A673 (cell line): ENCODE measurements at regions of chr3 and their contacts with region 1.

Region 1: DNA sequence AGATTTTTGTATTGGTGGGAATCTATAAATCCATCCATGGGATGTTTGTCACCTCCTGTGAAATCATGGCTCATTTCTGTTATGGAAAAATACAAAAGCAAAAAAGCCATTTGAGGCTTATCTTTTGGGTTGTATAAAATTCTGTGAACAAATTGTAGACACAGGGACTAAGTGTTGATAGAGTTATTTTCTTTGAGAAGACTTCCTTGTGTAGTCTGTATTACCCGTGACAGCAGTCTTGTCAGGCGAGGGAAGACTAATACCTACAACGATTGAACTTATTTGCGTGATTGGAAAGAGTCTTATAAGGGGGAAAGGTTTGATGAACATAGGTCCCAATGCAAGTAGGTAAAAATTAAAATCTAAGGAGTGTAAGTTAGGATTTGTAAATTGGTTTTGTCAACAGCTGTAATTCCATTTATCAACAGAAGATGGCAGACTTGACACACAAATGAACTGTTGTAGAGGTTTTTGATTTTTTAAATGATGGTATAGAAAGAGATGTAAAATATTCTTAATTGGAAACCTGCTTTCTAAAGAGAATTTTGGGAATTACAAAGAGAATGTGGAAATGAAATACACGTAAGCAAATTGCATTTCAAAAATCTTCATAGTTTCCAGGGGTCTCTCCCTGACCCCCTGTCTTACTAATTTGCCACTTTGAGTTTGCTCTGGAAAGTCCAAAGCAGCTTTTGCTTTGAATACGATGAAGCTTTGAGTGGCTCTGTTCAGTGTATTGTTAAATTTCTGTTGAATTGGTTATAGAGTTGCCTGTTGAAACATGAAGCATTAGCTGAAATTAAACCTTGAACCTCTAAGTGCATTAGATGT is 33.2 kb downstream of the SLC25A26 start:
- DNase-seq: peak; percentile 27
- H3K4me3 ChIP-seq: no peak overlapping the region
- H3K27ac ChIP-seq: no peak overlapping the region
- H3K4me1 ChIP-seq: no peaks in the 10 kb centered on the region
- H3K27me3 ChIP-seq: no peaks in the 10 kb centered on the region
- CTCF ChIP-seq: peak; percentile 62

Region 2: DNA sequence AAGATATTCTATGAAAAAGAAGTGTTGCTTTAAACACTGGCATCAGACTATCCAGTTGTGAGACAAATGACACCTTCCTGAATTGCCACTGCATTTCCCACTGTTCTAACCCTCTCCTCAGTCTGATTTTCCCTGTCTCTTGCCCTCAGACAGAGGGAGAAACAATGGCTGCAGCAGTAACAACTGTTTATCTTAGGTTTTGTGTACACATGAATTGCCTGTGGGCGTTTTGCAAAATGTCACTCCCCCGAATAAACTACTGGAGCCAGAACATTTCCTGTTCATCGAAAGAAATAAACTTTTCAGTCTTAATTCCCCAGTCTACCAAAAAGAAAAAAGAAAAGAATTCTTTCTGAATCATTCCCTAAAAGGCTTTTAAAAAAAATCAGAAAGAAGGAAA is 370.4 kb before region 1 on chr3:
- CTCF ChIA-PET with region 1: no interaction called
- POLR2A ChIA-PET with region 1: no interaction called
- intact Hi-C with region 1: no loop called
- DNase-seq: no peak
- H3K4me3 ChIP-seq: no peak overlapping the region
- H3K27ac ChIP-seq: peak overlapping the region; percentile 57
- H3K4me1 ChIP-seq: peaks cover 7% of the 10 kb centered on the region
- H3K27me3 ChIP-seq: no peaks in the 10 kb centered on the region
- CTCF ChIP-seq: no peak

Region 3: DNA sequence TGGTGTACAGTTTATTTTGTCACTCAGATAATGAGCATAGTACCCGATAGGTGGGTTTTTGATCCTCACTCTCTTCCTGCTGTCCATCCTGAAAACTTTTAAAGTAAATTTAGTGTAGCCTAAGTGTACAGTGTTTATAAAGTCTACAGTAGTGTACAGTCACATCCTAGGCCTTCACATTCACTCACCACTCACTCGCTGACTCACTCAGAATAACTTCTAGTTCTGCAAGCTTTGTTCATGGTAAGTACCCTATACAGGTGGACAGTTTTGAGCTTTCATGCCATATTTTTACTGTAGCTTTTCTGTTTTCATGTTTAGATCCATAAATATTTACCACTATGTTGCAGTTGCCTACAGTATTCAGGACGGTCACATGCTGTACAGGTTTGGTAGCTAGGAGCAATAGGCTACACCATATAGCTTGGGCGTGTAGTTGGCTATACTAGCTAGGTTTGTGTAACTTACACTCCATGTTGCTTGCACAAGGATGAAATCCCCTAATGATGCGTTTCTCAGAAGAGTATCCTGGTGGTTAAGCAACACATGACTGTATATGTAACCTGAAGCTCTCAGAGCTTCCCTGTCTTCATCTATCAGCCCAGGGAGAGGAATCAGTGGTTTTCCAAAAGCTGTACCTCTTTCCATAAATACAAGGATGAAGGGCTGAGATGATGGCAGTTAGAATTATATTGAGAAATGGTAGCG is 120.8 kb before region 1 on chr3:
- CTCF ChIA-PET with region 1: no interaction called
- POLR2A ChIA-PET with region 1: no interaction called
- intact Hi-C with region 1: no loop called
- DNase-seq: no peak
- H3K4me3 ChIP-seq: no peak overlapping the region
- H3K27ac ChIP-seq: no peak overlapping the region
- H3K4me1 ChIP-seq: no peaks in the 10 kb centered on the region
- H3K27me3 ChIP-seq: no peaks in the 10 kb centered on the region
- CTCF ChIP-seq: no peak

Region 4: DNA sequence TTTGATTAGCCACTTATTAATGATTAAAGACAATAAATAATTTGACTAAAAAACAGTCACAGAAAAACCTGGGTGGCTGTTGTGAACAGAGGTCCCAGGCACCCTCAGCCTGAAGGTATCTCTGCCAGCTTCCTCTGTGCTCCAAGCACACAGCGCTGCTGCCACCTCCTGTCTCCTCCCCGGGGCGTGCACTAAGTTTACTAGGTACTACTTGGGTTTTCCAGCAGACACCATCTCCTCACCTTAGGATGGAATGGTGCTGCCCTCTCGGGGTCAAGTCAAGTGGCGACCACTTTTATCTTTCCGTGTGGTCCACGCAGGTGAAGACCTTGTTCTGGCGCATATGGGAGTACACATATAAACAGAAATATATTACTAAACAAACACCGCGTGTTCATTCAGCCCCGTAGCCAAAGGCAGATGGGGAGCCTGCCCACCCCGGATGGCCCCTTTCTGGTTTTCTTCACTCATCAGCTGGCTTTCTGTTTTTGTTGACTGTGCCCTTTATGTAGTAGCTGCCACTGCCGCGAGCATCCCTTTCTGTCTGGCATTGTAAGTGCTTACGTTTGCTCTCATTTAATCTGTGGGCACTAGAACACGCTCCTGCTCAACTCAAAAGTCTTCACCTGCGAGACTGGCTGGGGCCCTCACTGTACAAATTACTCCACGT is 118.8 kb after region 1 on chr3:
- CTCF ChIA-PET with region 1: interaction called, 10 read pairs
- POLR2A ChIA-PET with region 1: no interaction called
- intact Hi-C with region 1: no loop called
- DNase-seq: peak; percentile 4
- H3K4me3 ChIP-seq: no peak overlapping the region
- H3K27ac ChIP-seq: no peak overlapping the region
- H3K4me1 ChIP-seq: no peaks in the 10 kb centered on the region
- H3K27me3 ChIP-seq: no peaks in the 10 kb centered on the region
- CTCF ChIP-seq: peak; percentile 45

Region 5: DNA sequence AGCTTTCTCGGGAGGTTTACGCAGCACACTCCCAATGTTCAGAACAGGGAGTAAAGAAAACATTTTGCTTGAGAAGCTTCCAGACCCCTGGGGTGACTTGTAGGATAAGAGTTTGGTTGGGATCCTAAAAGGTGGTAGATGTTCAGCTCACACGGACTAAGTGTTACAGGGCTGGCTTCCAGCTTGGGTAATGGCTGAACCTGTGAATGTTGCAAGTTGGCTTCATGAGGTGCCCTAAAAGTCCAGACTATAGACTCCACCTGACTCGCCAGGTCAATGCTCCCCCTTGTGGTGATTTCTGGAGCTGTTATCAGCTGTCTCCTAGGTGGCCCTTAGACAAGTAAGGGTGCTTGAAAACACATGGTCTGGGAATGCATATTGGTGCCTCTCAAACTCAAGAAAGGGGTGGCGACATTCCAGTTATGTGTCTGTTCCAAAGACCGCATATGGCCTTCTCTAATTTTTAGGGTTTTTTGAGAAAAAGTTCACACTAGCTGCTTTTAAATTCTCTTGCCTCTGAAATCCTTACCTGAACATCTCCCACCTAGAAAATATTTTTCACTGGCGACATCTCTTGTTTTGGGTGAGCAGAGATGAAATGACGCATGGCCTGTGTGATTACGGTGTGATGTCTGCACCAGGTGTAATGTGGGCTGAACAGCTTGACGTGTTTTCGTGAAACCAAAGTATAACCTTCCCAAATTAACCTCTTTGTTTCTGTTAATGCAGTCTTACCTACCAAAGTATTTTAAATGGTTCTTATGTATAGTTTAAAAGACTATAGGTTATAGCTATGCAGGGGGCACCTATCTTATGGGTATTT is 568.4 kb after region 1 on chr3:
- CTCF ChIA-PET with region 1: no interaction called
- POLR2A ChIA-PET with region 1: no interaction called
- intact Hi-C with region 1: loop called (anchors 5 kb)
- DNase-seq: peak; percentile 46
- H3K4me3 ChIP-seq: no peak overlapping the region
- H3K27ac ChIP-seq: no peak overlapping the region
- H3K4me1 ChIP-seq: no peaks in the 10 kb centered on the region
- H3K27me3 ChIP-seq: no peaks in the 10 kb centered on the region
- CTCF ChIP-seq: peak; percentile 64